Heart right ventricle (tissue), 16 donors: ENCODE measurements at regions of chr14 and their contacts with region 1.

Region 1: GRCh38 chr14:75307700-75308379 is 29.2 kb downstream of the FOS start:
- DNase-seq: peak; percentile 87 to 90
- ATAC-seq: peak; percentile 57 to 72 (median 66)
- H3K4me3 ChIP-seq: no peak overlapping the region
- H3K27ac ChIP-seq: no peak overlapping the region
- H3K4me1 ChIP-seq: peaks cover 7 to 40% (median 24%) of the 10 kb centered on the region in 9 donors
- H3K27me3 ChIP-seq: no peaks in the 10 kb centered on the region
- CTCF ChIP-seq: peak; percentile 87 to 97 (median 94)

Region 2: DNA sequence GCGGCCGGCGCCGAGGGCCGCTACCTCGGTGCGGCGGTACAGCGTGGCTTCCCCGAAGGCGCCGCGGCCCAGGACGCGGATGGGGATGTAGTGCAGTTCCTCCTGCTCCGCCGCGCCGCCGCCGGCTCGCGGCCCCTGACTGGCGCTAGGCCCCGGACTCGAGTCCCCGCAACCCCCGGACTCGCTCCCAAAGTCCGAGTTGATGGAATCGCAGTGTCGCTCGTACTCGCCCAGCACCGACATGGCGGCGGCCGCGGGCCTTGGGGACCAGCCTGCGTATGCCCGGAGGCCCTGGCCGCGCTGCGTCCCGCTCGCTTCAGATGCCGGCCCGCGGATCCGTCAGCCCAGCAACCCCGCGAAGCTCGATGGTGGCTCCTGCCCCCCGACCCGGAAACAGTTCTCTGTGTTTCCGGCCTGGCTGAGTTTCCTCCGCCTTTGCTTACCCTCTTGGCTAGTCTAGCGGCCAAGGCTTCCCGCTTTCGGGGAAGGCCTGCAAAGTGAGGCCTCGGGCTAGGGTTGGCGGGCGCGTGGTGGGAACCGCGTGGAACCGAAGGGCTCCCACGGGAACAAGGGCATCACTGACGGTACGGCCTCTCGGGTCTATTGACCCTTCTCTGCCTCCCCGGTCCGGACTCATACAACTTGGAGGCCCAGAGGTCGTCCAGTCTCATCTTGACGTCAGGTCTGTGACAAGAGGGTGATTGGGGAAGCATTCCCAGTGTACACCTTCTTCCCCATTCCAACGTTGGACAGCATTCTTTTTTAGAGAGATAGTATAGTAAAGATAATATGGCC is 181.0 kb before region 1 on chr14 and contains the start of gene NEK9:
- intact Hi-C with region 1: loop called in 3 of 10 experiments (anchors 1 to 2 kb)
- DNase-seq: peak; percentile 91 to 94
- ATAC-seq: peak; percentile 95 to 98 (median 96)
- H3K4me3 ChIP-seq: peak within 1 kb of the TSS; percentile 63 to 96 (median 84)
- H3K27ac ChIP-seq: peak within 1 kb of the TSS; percentile 90 to 99 (median 96)
- H3K4me1 ChIP-seq: peaks cover 0 to 54% (median 41%) of the 10 kb centered on the region in 9 donors
- H3K27me3 ChIP-seq: no peaks in the 10 kb centered on the region
- CTCF ChIP-seq: peak in 1 of 9 donors; percentile 13
- total RNA-seq, gene NEK9: 97.8 to 138 (median 115) TPM

Region 3: DNA sequence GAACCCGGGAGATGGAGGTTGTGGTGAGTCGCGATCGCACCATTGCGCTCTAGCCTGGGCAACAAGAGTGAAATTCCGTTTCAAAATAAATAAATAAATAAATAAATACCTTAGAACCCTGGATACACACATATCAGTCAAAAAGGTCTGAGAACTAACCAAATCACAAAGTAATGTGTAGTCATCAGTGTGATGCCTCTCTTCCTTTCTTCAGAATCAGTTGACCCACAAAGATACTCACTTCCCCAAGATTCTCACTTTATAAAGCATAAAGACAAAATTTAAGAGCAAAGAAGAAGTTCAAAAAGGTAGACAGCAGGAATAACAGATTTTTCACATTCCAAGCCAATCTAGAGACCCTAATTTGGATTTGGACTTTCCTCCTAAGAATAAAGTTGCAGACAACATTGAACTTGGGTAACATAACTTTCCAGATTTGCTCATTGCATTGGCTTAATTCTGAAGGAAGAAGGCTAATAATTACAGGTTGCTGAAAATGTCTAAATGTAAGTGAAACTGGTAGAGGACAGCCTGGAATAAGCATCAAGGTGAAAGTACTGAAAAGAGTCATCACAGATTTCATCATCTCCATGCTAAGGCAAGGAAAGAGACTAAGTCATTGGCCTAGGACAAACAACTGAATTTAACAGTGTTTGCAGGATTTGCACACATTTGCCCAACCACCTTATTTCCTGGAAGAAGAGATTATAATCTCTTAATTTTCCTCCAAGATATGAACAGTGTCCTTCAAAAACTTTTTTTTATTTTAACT is 148.8 kb before region 1 on chr14:
- intact Hi-C with region 1: no loop called
- DNase-seq: no peak
- ATAC-seq: no peak
- H3K4me3 ChIP-seq: no peak overlapping the region
- H3K27ac ChIP-seq: no peak overlapping the region
- H3K4me1 ChIP-seq: peaks cover 4 to 41% (median 25%) of the 10 kb centered on the region in 9 donors
- H3K27me3 ChIP-seq: no peaks in the 10 kb centered on the region
- CTCF ChIP-seq: no peak

Region 4: GRCh38 chr14:75340921-75341320 is 33.1 kb after region 1 on chr14:
- intact Hi-C with region 1: loop called in 1 of 10 experiments (anchors 2 kb)
- DNase-seq: peak; percentile 82 to 95
- ATAC-seq: peak; percentile 81 to 98 (median 96)
- H3K4me3 ChIP-seq: no peak overlapping the region
- H3K27ac ChIP-seq: peak overlapping the region; percentile 72 to 91 (median 84)
- H3K4me1 ChIP-seq: peaks cover 11 to 76% (median 38%) of the 10 kb centered on the region in 9 donors
- H3K27me3 ChIP-seq: no peaks in the 10 kb centered on the region
- CTCF ChIP-seq: no peak

Region 5: GRCh38 chr14:75487155-75487671 is 179.4 kb after region 1 on chr14:
- intact Hi-C with region 1: loop called (anchors 1 to 2 kb)
- DNase-seq: no peak
- ATAC-seq: no peak
- H3K4me3 ChIP-seq: no peak overlapping the region
- H3K27ac ChIP-seq: no peak overlapping the region
- H3K4me1 ChIP-seq: peaks cover 0 to 9% (median 0%) of the 10 kb centered on the region in 9 donors
- H3K27me3 ChIP-seq: no peaks in the 10 kb centered on the region
- CTCF ChIP-seq: no peak

Region 6: GRCh38 chr14:75560962-75561432 is 253.2 kb after region 1 on chr14:
- intact Hi-C with region 1: loop called in 4 of 10 experiments (anchors 2 to 10 kb)
- DNase-seq: peak; percentile 56 to 70
- ATAC-seq: peak; percentile 80 to 90 (median 85)
- H3K4me3 ChIP-seq: no peak overlapping the region
- H3K27ac ChIP-seq: no peak overlapping the region
- H3K4me1 ChIP-seq: peaks cover 0 to 20% (median 2%) of the 10 kb centered on the region in 9 donors
- H3K27me3 ChIP-seq: peaks cover 0 to 2% (median 0%) of the 10 kb centered on the region in 7 donors
- CTCF ChIP-seq: peak; percentile 43 to 93 (median 76)